Activated naive CD8-positive, alpha-beta T cell treated with anti-CD3 and anti-CD28 coated beads, Interleukin-2, amount 10 ng/mL, durations not matched to agents 7 days and 5 days (primary cell): ENCODE measurements at regions of chr6 and their contacts with region 1.

Region 1: DNA sequence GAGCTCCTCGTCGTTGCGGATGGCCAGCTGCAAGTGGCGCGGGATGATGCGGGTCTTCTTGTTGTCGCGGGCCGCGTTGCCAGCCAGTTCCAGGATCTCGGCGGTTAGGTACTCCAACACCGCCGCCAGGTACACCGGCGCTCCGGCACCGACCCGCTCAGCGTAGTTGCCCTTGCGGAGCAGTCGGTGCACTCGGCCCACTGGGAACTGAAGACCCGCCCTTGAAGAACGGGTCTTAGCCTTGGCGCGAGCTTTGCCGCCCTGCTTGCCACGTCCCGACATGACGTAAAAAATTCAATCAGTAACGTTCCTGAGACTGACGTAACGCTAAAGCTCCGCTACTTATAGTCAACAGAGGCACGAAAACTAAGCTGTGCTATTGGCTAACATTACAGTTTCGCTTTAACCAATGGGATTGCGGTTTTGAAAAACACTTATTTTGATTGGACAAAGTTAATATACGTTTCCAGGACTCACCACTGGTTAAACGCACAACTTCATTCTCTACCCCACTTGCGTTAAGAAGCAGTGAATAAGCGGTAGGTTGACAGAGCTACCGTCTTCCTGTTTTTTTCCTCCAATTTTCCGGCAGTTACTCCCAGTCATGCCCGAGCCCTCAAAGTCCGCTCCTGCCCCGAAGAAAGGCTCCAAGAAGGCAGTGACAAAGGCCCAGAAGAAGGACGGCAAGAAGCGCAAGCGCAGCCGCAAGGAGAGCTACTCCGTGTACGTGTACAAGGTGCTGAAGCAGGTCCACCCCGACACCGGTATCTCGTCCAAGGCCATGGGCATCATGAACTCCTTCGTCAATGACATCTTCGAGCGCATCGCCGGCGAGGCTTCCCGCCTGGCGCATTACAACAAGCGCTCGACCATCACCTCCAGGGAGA is 73.9 kb downstream of the OR2B2 start:
- DNase-seq: peak; percentile 84
- ATAC-seq: peak; percentile 74
- H3K4me3 Mint-ChIP-seq: no peak overlapping the region
- H3K27ac Mint-ChIP-seq: no peak overlapping the region
- H3K4me1 Mint-ChIP-seq: peaks cover 26% of the 10 kb centered on the region
- H3K27me3 Mint-ChIP-seq: peaks cover 2% of the 10 kb centered on the region

Region 2: DNA sequence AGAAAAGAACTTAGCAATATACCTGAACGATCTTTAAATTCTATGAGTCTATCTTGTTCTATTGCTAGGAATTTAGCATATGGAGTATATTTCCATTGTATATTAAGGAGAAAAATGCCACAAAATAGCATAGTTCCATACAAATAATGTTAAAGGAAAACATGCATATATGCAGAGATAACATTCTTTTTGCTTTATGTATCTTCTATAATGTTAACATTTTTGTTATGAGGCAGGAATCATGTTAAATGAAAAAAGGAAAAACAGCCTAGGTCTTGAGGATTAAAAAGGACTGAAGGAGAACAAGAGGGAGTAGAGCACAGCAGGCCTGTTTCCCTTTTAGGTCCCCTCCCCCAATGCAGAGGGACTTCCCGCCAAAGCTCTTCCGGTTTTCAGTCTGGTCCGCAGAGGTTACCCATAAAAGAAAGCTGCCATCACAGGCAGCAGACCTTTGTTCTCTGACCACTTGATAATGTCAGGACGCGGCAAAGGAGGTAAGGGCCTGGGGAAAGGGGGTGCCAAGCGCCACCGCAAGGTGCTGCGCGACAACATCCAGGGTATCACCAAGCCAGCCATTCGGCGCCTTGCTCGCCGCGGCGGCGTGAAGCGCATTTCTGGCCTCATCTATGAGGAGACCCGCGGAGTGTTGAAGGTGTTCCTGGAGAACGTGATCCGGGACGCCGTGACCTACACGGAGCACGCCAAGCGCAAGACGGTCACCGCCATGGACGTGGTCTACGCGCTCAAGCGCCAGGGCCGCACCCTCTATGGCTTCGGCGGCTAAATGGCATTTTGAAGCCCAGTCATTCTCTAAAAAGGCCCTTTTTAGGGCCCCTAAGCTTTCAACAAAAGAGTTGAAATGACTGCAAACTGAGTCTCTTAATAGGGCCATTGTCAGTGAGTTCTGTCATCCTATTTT is 699.2 kb before region 1 on chr6:
- POLR2A ChIA-PET with region 1: interaction called, 66 read pairs
- DNase-seq: peak; percentile 81
- ATAC-seq: peak; percentile 73
- H3K4me3 Mint-ChIP-seq: peak overlapping the region; percentile 95
- H3K27ac Mint-ChIP-seq: peak overlapping the region; percentile 98
- H3K4me1 Mint-ChIP-seq: peaks cover 39% of the 10 kb centered on the region
- H3K27me3 Mint-ChIP-seq: no peaks in the 10 kb centered on the region

Region 3: GRCh38 chr6:27825025-27825793 is 13.1 kb before region 1 on chr6:
- POLR2A ChIA-PET with region 1: interaction called, 326 read pairs
- DNase-seq: no peak
- ATAC-seq: peak; percentile 2
- H3K4me3 Mint-ChIP-seq: peak overlapping the region; percentile 90
- H3K27ac Mint-ChIP-seq: peak overlapping the region; percentile 99
- H3K4me1 Mint-ChIP-seq: peaks cover 39% of the 10 kb centered on the region
- H3K27me3 Mint-ChIP-seq: no peaks in the 10 kb centered on the region

Region 4: GRCh38 chr6:27854421-27854820 is 16.1 kb after region 1 on chr6:
- POLR2A ChIA-PET with region 1: interaction called, 2,159 read pairs
- DNase-seq: no peak
- ATAC-seq: no peak
- H3K4me3 Mint-ChIP-seq: no peak overlapping the region
- H3K27ac Mint-ChIP-seq: no peak overlapping the region
- H3K4me1 Mint-ChIP-seq: no peaks in the 10 kb centered on the region
- H3K27me3 Mint-ChIP-seq: peaks cover 9% of the 10 kb centered on the region